Panc1 (cell line): ENCODE measurements at regions of chr2 and their contacts with region 1.

Region 1: GRCh38 chr2:131041402-131042147 is 51.7 kb downstream of the FAM168B start:
- DNase-seq: no peak
- ATAC-seq: no peak
- H3K4me3 ChIP-seq: no peak overlapping the region
- H3K27ac ChIP-seq: no peak overlapping the region
- H3K4me1 ChIP-seq: no peaks in the 10 kb centered on the region
- H3K27me3 ChIP-seq: no peaks in the 10 kb centered on the region
- CTCF ChIP-seq: no peak

Region 2: DNA sequence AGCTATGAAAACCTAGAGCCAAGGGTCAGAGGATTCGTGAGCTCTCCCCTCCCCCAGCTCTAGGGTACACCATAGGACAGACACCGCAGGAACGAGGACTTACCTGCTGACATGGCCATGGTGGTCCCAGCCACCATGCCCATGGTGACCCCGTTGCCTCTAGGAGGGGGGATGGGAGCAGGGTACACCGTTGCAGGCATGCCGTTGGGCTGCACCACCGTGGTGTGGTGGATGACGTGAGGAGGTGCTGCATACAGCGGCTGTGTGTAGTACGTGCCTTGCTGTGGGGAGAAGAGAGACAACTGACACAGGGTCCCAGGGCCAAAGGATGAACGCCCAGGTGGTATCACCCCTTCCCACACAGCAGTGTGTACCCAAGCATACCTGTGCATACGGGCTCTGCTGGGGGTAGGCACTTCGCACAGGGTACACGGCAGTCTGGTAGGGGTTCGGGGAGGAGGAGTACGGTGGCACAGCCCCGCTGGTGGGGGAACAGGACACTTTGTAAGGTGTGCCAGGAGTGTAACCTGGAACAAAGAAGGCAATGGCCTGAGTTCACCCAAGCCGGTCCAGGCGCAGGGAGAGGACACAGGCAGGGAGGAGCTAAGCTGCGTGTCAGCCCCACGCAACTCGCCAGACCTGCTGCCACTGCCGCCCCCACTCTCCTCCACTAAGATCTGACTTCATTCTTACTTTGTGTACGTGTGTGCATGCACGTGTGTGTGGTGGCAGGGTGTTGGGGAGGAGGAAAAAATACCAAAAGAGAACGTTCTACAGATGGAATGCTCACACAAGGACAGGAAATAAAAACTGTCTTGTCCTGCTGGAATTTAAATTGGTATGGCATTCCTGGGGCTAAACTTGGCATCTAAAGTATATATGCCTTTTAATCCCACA is 13.8 kb after region 1 on chr2:
- CTCF ChIA-PET with region 1: no interaction called
- POLR2A ChIA-PET with region 1: interaction called, 11 read pairs
- in situ Hi-C with region 1: no loop called
- intact Hi-C with region 1: no loop called
- DNase-seq: no peak
- ATAC-seq: no peak
- H3K4me3 ChIP-seq: no peak overlapping the region
- H3K27ac ChIP-seq: no peak overlapping the region
- H3K4me1 ChIP-seq: no peaks in the 10 kb centered on the region
- H3K27me3 ChIP-seq: no peaks in the 10 kb centered on the region
- CTCF ChIP-seq: no peak

Region 3: GRCh38 chr2:131067488-131068125 is 26.0 kb after region 1 on chr2:
- CTCF ChIA-PET with region 1: no interaction called
- POLR2A ChIA-PET with region 1: no interaction called
- in situ Hi-C with region 1: no loop called
- intact Hi-C with region 1: no loop called
- DNase-seq: no peak
- ATAC-seq: no peak
- H3K4me3 ChIP-seq: no peak overlapping the region
- H3K27ac ChIP-seq: no peak overlapping the region
- H3K4me1 ChIP-seq: no peaks in the 10 kb centered on the region
- H3K27me3 ChIP-seq: no peaks in the 10 kb centered on the region
- CTCF ChIP-seq: no peak